Naive thymus-derived CD4-positive, alpha-beta T cell (primary cell): ENCODE measurements at regions of chrX and their contacts with region 1.

Region 1: GRCh38 chrX:102950908-102951866 is 14.1 kb downstream of the RAB40AL start:
- DNase-seq: peak; percentile 12 to 57 (median 46)
- ATAC-seq: peak; percentile 82
- H3K4me3 ChIP-seq: peak overlapping the region; percentile 68
- H3K4me3 Mint-ChIP-seq: peak overlapping the region in 9 of 10 donors; percentile 24 to 88 (median 80)
- H3K27ac ChIP-seq: no peak overlapping the region
- H3K27ac Mint-ChIP-seq: no peak overlapping the region
- H3K4me1 ChIP-seq: no peaks in the 10 kb centered on the region
- H3K4me1 Mint-ChIP-seq: peaks cover 3 to 6% (median 5%) of the 10 kb centered on the region in 7 donors
- H3K27me3 ChIP-seq: no peaks in the 10 kb centered on the region
- H3K27me3 Mint-ChIP-seq: peaks cover 0 to 6% (median 0%) of the 10 kb centered on the region in 5 donors

Region 2: DNA sequence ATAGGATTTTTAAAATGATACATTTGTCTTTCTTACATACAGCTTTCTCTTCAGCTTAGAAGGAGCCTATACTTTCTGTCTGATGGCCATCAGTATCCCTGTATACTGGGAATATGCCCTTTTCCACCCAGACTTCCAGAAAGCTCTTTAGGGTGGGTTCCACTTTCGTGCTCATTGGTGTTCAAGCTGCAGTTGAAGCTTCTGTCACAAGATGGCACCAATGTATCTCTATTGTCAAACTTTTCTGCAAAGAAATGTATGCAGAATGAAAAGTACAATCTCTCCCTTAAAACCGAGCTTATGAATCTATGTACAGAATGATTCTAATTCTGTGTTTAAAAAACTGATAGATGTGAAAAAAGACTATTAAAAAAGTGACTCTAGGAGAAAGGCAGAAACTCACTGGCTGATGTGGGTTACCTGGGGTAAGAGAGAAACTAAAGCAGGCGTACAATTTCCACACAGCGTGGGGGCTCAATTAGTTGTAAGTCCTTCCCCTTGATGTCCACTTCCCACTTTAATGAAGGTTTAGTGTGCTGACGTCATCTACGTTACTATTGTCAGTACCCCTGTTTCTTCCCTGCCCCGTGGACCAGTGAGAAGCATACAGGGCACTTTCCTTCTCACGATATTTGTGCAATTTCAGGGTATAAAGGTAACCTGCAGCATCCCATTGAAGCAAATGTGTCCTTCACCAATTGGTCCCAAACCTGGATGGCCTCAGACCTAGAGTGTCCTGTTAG is 883.0 kb before region 1 on chrX:
- CTCF ChIA-PET with region 1: interaction called, 3 read pairs
- POLR2A ChIA-PET with region 1: no interaction called
- intact Hi-C with region 1: loop called in 1 of 2 experiments (anchors 1 kb)
- DNase-seq: peak in 5 of 9 donors; percentile 4 to 30 (median 17)
- ATAC-seq: no peak
- H3K4me3 ChIP-seq: no peak overlapping the region
- H3K4me3 Mint-ChIP-seq: no peak overlapping the region
- H3K27ac ChIP-seq: no peak overlapping the region
- H3K27ac Mint-ChIP-seq: no peak overlapping the region
- H3K4me1 ChIP-seq: no peaks in the 10 kb centered on the region
- H3K4me1 Mint-ChIP-seq: no peaks in the 10 kb centered on the region
- H3K27me3 ChIP-seq: no peaks in the 10 kb centered on the region
- H3K27me3 Mint-ChIP-seq: peaks cover 0 to 18% (median 9%) of the 10 kb centered on the region in 5 donors

Region 3: GRCh38 chrX:103157496-103158320 is 206.5 kb after region 1 on chrX:
- CTCF ChIA-PET with region 1: no interaction called
- POLR2A ChIA-PET with region 1: no interaction called
- intact Hi-C with region 1: loop called (anchors 5 kb)
- DNase-seq: peak in 3 of 9 donors; percentile 9 to 11 (median 10)
- ATAC-seq: no peak
- H3K4me3 ChIP-seq: no peak overlapping the region
- H3K4me3 Mint-ChIP-seq: no peak overlapping the region
- H3K27ac ChIP-seq: no peak overlapping the region
- H3K27ac Mint-ChIP-seq: no peak overlapping the region
- H3K4me1 ChIP-seq: no peaks in the 10 kb centered on the region
- H3K4me1 Mint-ChIP-seq: peaks cover 0 to 7% (median 4%) of the 10 kb centered on the region in 7 donors
- H3K27me3 ChIP-seq: no peaks in the 10 kb centered on the region
- H3K27me3 Mint-ChIP-seq: no peaks in the 10 kb centered on the region

Region 4: DNA sequence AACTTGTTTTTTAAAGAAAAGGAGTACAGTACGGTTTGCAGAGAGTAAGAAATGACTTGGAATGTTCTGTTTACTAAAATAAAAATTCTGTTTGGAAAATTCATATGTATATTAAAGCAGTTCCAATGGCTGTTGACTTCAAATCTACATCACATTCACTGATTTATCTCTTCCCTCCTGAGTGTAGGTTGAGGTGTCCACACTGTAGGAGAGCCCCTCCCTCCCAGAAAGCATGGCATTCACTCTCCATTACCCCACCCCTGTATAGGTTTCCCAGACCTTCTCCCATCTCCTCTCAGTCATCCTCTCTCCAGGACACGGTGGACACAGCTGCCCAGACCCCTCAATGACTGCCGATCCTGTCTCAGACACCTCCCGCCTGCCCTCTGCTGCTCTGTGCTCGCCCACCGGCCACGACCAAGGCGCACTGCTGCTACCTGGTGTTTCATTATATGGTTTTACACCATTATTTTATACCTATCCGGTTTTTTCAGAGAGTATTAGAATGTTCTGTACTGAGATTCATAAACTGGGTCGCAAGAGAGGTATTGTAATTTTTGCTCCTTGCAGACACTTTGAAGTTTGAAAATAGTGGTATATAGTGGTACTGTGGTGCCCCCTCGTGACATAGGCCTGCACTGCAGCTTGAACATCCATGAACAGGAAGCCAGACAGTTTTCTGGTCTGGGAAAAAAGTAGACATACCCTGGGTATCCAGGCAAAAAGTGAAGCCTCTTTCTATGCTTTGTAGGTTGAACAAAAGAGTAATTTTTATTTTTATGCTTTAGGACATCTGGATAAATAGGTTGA is 225.0 kb after region 1 on chrX:
- CTCF ChIA-PET with region 1: interaction called, 16 read pairs
- POLR2A ChIA-PET with region 1: no interaction called
- intact Hi-C with region 1: loop called (anchors 1 kb)
- DNase-seq: peak; percentile 16 to 56 (median 43)
- ATAC-seq: peak; percentile 78
- H3K4me3 ChIP-seq: no peak overlapping the region
- H3K4me3 Mint-ChIP-seq: peak overlapping the region; percentile 7 to 71 (median 42)
- H3K27ac ChIP-seq: no peak overlapping the region
- H3K27ac Mint-ChIP-seq: no peak overlapping the region
- H3K4me1 ChIP-seq: no peaks in the 10 kb centered on the region
- H3K4me1 Mint-ChIP-seq: peaks cover 2 to 5% (median 4%) of the 10 kb centered on the region in 7 donors
- H3K27me3 ChIP-seq: no peaks in the 10 kb centered on the region
- H3K27me3 Mint-ChIP-seq: peaks cover 0 to 9% (median 6%) of the 10 kb centered on the region in 5 donors

Region 5: DNA sequence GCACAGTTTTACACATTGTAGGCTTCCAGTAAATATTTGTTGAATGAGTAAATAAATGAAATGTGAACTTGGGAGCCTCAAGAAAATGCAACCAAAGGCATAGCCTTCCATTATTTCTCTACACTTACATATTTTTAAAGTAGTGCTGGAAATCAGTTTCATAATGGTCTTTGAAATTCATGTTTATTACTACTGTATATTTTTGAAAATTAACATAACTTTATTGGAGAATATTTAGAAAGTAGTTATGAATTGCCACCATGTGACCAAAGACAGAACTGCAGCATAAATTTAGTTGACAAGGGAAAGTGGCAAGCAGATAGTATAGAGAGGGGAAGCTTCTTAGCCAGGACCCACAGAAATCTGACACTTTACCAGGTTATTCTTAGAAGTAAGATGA is 297.4 kb after region 1 on chrX:
- CTCF ChIA-PET with region 1: no interaction called
- POLR2A ChIA-PET with region 1: no interaction called
- intact Hi-C with region 1: loop called in 1 of 2 experiments (anchors 1 kb)
- DNase-seq: peak in 4 of 9 donors; percentile 8 to 27 (median 14)
- ATAC-seq: no peak
- H3K4me3 ChIP-seq: no peak overlapping the region
- H3K4me3 Mint-ChIP-seq: no peak overlapping the region
- H3K27ac ChIP-seq: no peak overlapping the region
- H3K27ac Mint-ChIP-seq: no peak overlapping the region
- H3K4me1 ChIP-seq: no peaks in the 10 kb centered on the region
- H3K4me1 Mint-ChIP-seq: peaks cover 3 to 16% (median 4%) of the 10 kb centered on the region in 7 donors
- H3K27me3 ChIP-seq: no peaks in the 10 kb centered on the region
- H3K27me3 Mint-ChIP-seq: peaks cover 0 to 12% (median 0%) of the 10 kb centered on the region in 5 donors

Region 6: GRCh38 chrX:103488794-103489193 is 537.6 kb after region 1 on chrX:
- CTCF ChIA-PET with region 1: interaction called, 3 read pairs
- POLR2A ChIA-PET with region 1: no interaction called
- intact Hi-C with region 1: loop called in 1 of 2 experiments (anchors 1 kb)
- DNase-seq: no peak
- ATAC-seq: no peak
- H3K4me3 ChIP-seq: no peak overlapping the region
- H3K4me3 Mint-ChIP-seq: no peak overlapping the region
- H3K27ac ChIP-seq: no peak overlapping the region
- H3K27ac Mint-ChIP-seq: no peak overlapping the region
- H3K4me1 ChIP-seq: no peaks in the 10 kb centered on the region
- H3K4me1 Mint-ChIP-seq: peaks cover 0 to 3% (median 0%) of the 10 kb centered on the region in 7 donors
- H3K27me3 ChIP-seq: no peaks in the 10 kb centered on the region
- H3K27me3 Mint-ChIP-seq: peaks cover 0 to 6% (median 3%) of the 10 kb centered on the region in 5 donors